Naive thymus-derived CD8-positive, alpha-beta T cell (primary cell): ENCODE measurements at regions of chr1 and their contacts with region 1.

Region 1: GRCh38 chr1:248858891-248859889 is at the start of gene ZNF692:
- DNase-seq: peak; percentile 95 to 99 (median 96)
- ATAC-seq: peak; percentile 79 to 89
- H3K4me3 Mint-ChIP-seq: peak within 1 kb of the TSS; percentile 78 to 97 (median 90)
- H3K27ac Mint-ChIP-seq: peak within 1 kb of the TSS; percentile 88 to 99 (median 96)
- H3K4me1 Mint-ChIP-seq: peaks cover 44 to 64% (median 61%) of the 10 kb centered on the region in 4 donors
- H3K27me3 Mint-ChIP-seq: no peaks in the 10 kb centered on the region
- polyA plus RNA-seq, gene ZNF692: 5.2 to 9.3 (median 5.9) TPM

Region 2: DNA sequence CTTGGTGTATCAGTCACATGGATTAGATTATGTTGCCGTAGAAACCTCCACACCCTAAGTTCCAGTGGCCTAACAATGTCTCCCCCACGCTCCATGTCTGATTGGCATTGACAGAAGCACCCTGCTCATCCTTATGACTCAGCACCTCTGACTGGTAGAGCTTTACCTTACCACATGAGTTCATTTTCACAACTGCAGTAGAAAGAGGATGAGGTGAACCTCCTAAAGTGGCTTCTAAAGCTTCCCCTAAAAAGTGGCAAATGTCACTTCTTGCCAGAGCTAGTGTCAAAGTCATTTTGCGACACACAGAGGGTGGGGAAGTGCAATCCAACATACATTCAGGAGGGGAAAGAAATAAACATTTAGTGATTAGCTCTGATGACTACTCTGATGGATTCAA is 73.0 kb before region 1 on chr1:
- POLR2A ChIA-PET with region 1: no interaction called
- DNase-seq: no peak
- ATAC-seq: no peak
- H3K4me3 Mint-ChIP-seq: no peak overlapping the region
- H3K27ac Mint-ChIP-seq: no peak overlapping the region
- H3K4me1 Mint-ChIP-seq: peaks cover 0 to 20% (median 1%) of the 10 kb centered on the region in 4 donors
- H3K27me3 Mint-ChIP-seq: peaks cover 4 to 24% (median 15%) of the 10 kb centered on the region in 5 donors

Region 3: GRCh38 chr1:248802454-248802853 is 56.7 kb before region 1 on chr1:
- POLR2A ChIA-PET with region 1: no interaction called
- DNase-seq: no peak
- ATAC-seq: no peak
- H3K4me3 Mint-ChIP-seq: no peak overlapping the region
- H3K27ac Mint-ChIP-seq: no peak overlapping the region
- H3K4me1 Mint-ChIP-seq: peaks cover 8 to 38% (median 18%) of the 10 kb centered on the region in 4 donors
- H3K27me3 Mint-ChIP-seq: peaks cover 8 to 49% (median 17%) of the 10 kb centered on the region in 5 donors

Region 4: DNA sequence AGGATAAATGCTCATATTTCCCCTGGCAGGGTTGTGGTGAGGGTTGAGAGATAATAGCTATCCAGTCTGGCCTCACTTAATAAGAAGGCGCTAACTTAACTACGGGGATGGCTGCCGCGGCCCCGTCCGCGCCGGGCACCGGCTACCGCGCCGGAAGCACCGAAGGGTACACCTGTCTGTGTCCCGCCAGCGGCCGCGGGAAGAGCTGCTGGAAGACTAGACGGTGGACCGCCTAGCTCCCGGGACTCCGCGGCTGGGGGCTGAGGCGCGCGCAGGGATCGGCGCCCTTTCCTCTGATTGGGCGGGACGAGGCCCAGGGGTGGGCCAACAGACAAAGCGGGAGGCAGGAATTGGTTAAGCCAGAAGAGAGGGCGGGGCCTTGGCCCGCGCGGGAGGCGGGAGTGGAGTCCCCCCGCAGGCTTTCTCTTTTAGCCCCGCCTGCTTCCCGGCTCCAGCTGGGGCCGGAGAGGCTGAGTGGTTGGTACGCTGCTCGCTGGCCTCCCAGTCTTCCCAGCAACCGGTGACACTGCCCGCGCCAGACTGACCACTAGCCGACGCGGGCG is 21.3 kb before region 1 on chr1 and contains the start of gene ZNF672:
- POLR2A ChIA-PET with region 1: interaction called, 141 read pairs
- DNase-seq: peak; percentile 88 to 96 (median 92)
- ATAC-seq: peak; percentile 82 to 85
- H3K4me3 Mint-ChIP-seq: peak within 1 kb of the TSS in 2 of 10 donors; percentile 92 to 95
- H3K27ac Mint-ChIP-seq: peak within 1 kb of the TSS in 6 of 10 donors; percentile 94 to 99 (median 98)
- H3K4me1 Mint-ChIP-seq: peaks cover 12 to 32% (median 30%) of the 10 kb centered on the region in 4 donors
- H3K27me3 Mint-ChIP-seq: peaks cover 0 to 7% (median 2%) of the 10 kb centered on the region in 5 donors
- polyA plus RNA-seq, gene ZNF672: 17.9 to 25.6 (median 19.6) TPM